Lower leg skin (tissue), 4 donors: ENCODE measurements at regions of chr21 and their contacts with region 1.

Region 1: GRCh38 chr21:30354308-30355005 is 6.1 kb upstream of the KRTAP23-1 start:
- DNase-seq: no peak
- H3K4me3 ChIP-seq: no peak overlapping the region
- CTCF ChIP-seq: no peak
- POLR2A ChIP-seq: no peak

Region 2: DNA sequence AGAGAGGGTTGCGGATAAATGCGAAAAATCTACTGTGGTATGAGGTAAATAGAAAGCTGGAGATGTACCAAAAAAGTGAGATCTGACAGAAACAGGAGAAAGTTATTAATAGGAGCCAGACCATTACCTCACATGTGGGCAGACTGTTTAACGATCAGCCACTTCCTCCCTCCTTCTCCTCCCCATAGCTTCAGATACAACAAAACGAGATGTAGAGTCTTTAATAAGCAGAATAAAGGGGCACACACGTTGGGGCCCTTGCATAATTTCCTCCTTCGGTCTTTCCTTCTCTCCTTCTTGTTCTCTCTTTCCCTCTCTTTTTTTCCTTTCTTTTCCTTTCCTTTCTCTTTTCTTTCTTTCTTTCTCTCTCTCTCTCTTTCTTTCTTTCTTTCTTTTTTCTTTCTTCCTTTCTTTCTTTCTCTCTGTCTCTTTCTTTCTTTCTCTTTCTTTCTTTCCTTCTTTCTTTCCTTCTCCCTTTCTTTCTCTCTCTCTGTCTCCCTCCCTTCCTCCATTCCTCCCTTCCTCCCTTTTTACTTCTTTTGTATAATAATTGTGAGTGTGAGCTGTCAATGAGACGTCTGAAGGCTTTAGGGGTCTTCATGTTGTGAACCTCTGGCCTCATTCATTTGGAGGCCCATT is 656.8 kb before region 1 on chr21:
- intact Hi-C with region 1: no loop called
- DNase-seq: no peak
- H3K4me3 ChIP-seq: no peak overlapping the region
- CTCF ChIP-seq: no peak
- POLR2A ChIP-seq: no peak

Region 3: GRCh38 chr21:30283404-30283803 is 71.1 kb before region 1 on chr21:
- intact Hi-C with region 1: loop called (anchors 2 kb)
- DNase-seq: no peak
- H3K4me3 ChIP-seq: no peak overlapping the region
- CTCF ChIP-seq: no peak
- POLR2A ChIP-seq: no peak

Region 4: GRCh38 chr21:30372139-30372770 is 17.8 kb after region 1 on chr21 and contains the start of gene KRTAP13-2:
- intact Hi-C with region 1: no loop called
- DNase-seq: no peak
- H3K4me3 ChIP-seq: no peak within 1 kb of the TSS
- CTCF ChIP-seq: no peak
- POLR2A ChIP-seq: no peak
- total RNA-seq, gene KRTAP13-2: 3.2 TPM in 1 of 4 donors, not detected in the others